Activated CD8-positive, alpha-beta T cell treated with anti-CD3 and anti-CD28 coated beads, Interleukin-2, amount 10 ng/mL, durations not matched to agents 7 days and 5 days (primary cell): ENCODE measurements at regions of chr3 and their contacts with region 1.

Region 1: DNA sequence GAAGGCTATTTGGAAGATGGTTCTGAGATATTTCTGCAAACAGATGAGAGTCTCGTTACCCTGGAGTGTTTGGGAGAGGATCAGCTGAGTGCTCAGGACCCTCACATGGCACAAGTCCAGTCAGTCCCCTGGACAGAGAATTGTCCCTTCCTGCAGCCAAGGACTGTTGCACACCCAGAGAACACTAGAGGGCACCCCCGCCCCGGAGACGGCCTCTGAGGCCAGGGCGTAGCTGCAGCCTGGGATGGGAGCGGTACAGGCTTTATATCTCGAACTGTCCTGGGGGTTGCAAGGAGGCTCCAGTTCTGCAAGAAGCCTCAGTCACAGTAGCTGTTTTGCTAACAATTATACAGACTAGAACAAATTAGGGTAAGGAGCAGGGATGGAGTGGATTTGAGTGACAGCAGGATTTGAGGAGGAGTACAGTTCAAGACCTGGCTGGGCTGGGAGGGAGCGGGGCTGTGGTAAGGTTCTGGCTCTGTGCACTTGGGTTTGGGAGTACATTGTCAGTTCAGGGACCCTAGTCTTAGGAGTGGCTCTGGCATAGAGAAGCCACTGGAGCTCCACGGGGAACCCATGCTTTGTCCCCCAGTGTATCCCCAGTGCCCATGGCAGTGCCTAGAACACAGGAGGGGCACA is 67.6 kb upstream of the HACD2 start:
- DNase-seq: peak; percentile 48
- ATAC-seq: peak; percentile 53
- H3K4me3 Mint-ChIP-seq: no peak overlapping the region
- H3K27ac Mint-ChIP-seq: no peak overlapping the region
- H3K4me1 Mint-ChIP-seq: no peaks in the 10 kb centered on the region
- H3K27me3 Mint-ChIP-seq: no peaks in the 10 kb centered on the region

Region 2: GRCh38 chr3:123688241-123688747 is 35.8 kb after region 1 on chr3:
- CTCF ChIA-PET with region 1: no interaction called
- POLR2A ChIA-PET with region 1: no interaction called
- DNase-seq: no peak
- ATAC-seq: no peak
- H3K4me3 Mint-ChIP-seq: no peak overlapping the region
- H3K27ac Mint-ChIP-seq: no peak overlapping the region
- H3K4me1 Mint-ChIP-seq: no peaks in the 10 kb centered on the region
- H3K27me3 Mint-ChIP-seq: no peaks in the 10 kb centered on the region

Region 3: GRCh38 chr3:123723522-123724168 is 71.2 kb after region 1 on chr3:
- CTCF ChIA-PET with region 1: interaction called, 14 read pairs
- POLR2A ChIA-PET with region 1: no interaction called
- DNase-seq: peak; percentile 70
- ATAC-seq: peak; percentile 81
- H3K4me3 Mint-ChIP-seq: no peak overlapping the region
- H3K27ac Mint-ChIP-seq: peak overlapping the region; percentile 39
- H3K4me1 Mint-ChIP-seq: no peaks in the 10 kb centered on the region
- H3K27me3 Mint-ChIP-seq: peaks cover 6% of the 10 kb centered on the region